CD4-positive, alpha-beta memory T cell (primary cell): ENCODE measurements at regions of chr9 and their contacts with region 1.

Region 1: GRCh38 chr9:133478851-133479711 is at the start of gene SLC2A6:
- DNase-seq: peak; percentile 73 to 79 (median 77)
- H3K4me3 ChIP-seq: peak within 1 kb of the TSS; percentile 42 to 55
- H3K4me3 Mint-ChIP-seq: peak within 1 kb of the TSS; percentile 67 to 83 (median 76)
- H3K27ac ChIP-seq: peak within 1 kb of the TSS; percentile 34
- H3K27ac Mint-ChIP-seq: peak within 1 kb of the TSS in 5 of 7 donors; percentile 55 to 81 (median 65)
- H3K4me1 ChIP-seq: peaks cover 15% of the 10 kb centered on the region
- H3K4me1 Mint-ChIP-seq: peaks cover 5 to 10% (median 8%) of the 10 kb centered on the region in 4 donors
- H3K27me3 ChIP-seq: no peaks in the 10 kb centered on the region
- H3K27me3 Mint-ChIP-seq: peaks cover 0 to 2% of the 10 kb centered on the region in 2 donors
- total RNA-seq, gene SLC2A6: 1.6 to 2.5 TPM

Region 2: GRCh38 chr9:133356391-133357091 is 122.5 kb before region 1 on chr9 and contains the starts of genes SURF1 and SURF2:
- CTCF ChIA-PET with region 1: no interaction called
- POLR2A ChIA-PET with region 1: no interaction called
- intact Hi-C with region 1: loop called (anchors 5 kb)
- DNase-seq: peak; percentile 85 to 90 (median 88)
- H3K4me3 ChIP-seq: peak within 1 kb of the TSS; percentile 61 to 73
- H3K4me3 Mint-ChIP-seq: peak within 1 kb of the TSS; percentile 85 to 92 (median 88)
- H3K27ac ChIP-seq: peak within 1 kb of the TSS; percentile 76
- H3K27ac Mint-ChIP-seq: peak within 1 kb of the TSS; percentile 89 to 93 (median 92)
- H3K4me1 ChIP-seq: peaks cover 33% of the 10 kb centered on the region
- H3K4me1 Mint-ChIP-seq: peaks cover 15 to 44% (median 27%) of the 10 kb centered on the region in 4 donors
- H3K27me3 ChIP-seq: no peaks in the 10 kb centered on the region
- H3K27me3 Mint-ChIP-seq: no peaks in the 10 kb centered on the region
- total RNA-seq, gene SURF1: 54.3 to 61.1 TPM
- total RNA-seq, gene SURF2: 19.5 to 19.8 TPM

Region 3: DNA sequence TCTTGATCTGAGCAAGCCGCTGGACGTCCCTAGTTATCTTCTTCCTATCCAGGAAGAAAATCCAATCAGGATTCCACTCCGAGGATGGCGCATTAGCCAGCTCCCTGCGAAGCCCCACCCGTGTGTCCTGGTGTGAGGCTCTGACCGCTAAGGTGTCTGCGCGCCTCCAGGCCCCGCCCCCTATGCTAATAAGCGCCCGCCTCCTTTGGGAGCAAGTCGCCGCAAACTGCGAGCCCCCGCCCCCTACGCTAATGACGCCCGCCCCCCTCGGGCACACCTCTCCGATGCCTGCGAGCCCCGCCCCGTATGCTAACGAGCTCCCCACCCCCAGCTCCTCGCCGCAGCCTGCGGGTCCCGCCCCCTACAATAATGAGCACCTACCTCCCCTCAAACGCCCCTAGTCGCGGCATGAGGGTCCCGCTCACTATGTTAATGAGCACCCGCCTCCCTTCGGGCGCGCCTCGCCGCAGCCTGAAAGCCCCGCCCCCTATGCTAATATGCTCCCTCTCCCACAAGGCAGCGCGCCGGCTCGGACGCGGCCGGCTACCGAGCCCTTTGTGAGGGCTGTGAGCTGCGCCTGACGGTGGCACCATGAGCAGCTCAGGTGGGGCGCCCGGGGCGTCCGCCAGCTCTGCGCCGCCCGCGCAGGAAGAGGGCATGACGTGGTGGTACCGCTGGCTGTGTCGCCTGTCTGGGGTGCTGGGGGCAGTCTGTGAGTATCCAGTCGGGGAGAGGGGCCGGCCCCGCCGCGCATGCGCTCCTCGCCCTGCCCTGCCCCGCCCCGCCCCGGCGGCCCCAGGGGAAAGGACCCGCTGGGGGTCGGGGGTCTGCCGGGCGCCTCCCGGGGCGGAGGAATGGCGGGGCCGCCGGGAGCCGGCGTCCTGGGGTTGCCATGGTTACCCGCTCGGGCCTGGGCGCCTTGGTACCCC is 19.3 kb before region 1 on chr9 and contains the start of gene CACFD1:
- CTCF ChIA-PET with region 1: interaction called, 3 read pairs
- POLR2A ChIA-PET with region 1: interaction called, 5 read pairs
- intact Hi-C with region 1: loop called (anchors 1 kb)
- DNase-seq: peak; percentile 87 to 95 (median 88)
- H3K4me3 ChIP-seq: peak within 1 kb of the TSS; percentile 36 to 87
- H3K4me3 Mint-ChIP-seq: peak within 1 kb of the TSS; percentile 88 to 96 (median 92)
- H3K27ac ChIP-seq: peak within 1 kb of the TSS; percentile 78
- H3K27ac Mint-ChIP-seq: peak within 1 kb of the TSS; percentile 93 to 97 (median 95)
- H3K4me1 ChIP-seq: peaks cover 10% of the 10 kb centered on the region
- H3K4me1 Mint-ChIP-seq: peaks cover 2 to 21% (median 6%) of the 10 kb centered on the region in 4 donors
- H3K27me3 ChIP-seq: no peaks in the 10 kb centered on the region
- H3K27me3 Mint-ChIP-seq: no peaks in the 10 kb centered on the region
- total RNA-seq, gene CACFD1: 2.5 to 2.6 TPM